WTC11 (cell line): ENCODE measurements at regions of chr13 and their contacts with region 1.

Region 1: GRCh38 chr13:81872581-81872980 is 1531.7 kb upstream of the SPRY2 start:
- DNase-seq: no peak
- ATAC-seq: peak; percentile 15
- H3K4me3 Mint-ChIP-seq: no peak overlapping the region
- H3K27ac Mint-ChIP-seq: no peak overlapping the region; the same call in 1 of the 2 replicates
- H3K4me1 Mint-ChIP-seq: peaks cover 71% of the 10 kb centered on the region
- H3K27me3 Mint-ChIP-seq: no peaks in the 10 kb centered on the region; the same call in 1 of the 2 replicates
- CTCF ChIP-seq: no peak

Region 2: DNA sequence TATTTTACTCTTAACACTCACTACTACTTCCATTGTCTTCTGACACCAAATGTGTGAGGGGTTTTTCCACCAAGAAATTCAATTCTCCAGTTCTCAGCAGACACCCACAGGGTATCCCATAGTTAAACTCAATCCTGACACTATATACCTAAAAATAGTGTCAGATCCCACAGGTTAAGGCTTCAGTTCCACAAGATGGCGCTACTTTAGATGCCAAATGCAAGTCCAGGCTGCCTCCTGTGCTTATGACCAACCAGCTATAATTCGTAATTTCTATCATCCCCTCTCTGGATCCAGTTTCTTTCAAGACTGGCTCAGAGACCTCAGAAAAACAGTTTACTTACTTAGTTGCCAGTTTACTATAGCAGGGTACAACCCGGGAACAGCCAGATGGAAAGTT is 385.4 kb before region 1 on chr13:
- CTCF ChIA-PET with region 1: interaction called, 17 read pairs
- POLR2A ChIA-PET with region 1: no interaction called
- DNase-seq: peak; percentile 49
- ATAC-seq: peak; percentile 100
- H3K4me3 Mint-ChIP-seq: no peak overlapping the region
- H3K27ac Mint-ChIP-seq: no peak overlapping the region
- H3K4me1 Mint-ChIP-seq: peaks cover 18% of the 10 kb centered on the region
- H3K27me3 Mint-ChIP-seq: no peaks in the 10 kb centered on the region
- CTCF ChIP-seq: peak; percentile 35

Region 3: DNA sequence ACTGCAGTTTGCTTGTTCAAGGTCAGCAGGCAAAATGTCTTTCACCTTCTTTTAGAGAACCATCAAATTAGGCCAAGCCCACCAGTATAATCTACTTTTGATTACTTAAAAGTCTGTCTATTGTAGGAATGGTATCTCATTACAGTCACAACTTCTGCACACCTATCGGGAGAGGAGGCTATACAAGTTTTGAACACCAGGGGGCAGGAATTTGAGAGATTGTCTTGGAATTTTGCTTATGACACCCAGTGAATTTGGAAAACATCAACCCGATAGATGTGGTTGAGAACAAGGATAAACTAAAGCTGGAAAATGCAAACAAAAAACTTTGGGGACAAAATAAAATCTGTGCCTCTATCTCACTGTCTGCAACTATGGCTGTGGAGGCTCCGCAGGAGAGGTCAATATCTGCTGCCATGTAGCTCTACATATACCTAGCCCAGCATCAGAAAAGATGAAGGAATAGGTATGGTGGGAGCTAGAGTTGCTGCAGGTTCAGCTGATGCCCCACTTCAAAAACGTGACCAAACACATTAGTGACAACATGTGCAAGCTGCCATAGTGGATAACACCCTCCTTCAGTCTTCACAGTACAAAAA is 232.5 kb before region 1 on chr13:
- CTCF ChIA-PET with region 1: interaction called, 12 read pairs
- POLR2A ChIA-PET with region 1: no interaction called
- DNase-seq: peak; percentile 13
- ATAC-seq: peak; percentile 56
- H3K4me3 Mint-ChIP-seq: no peak overlapping the region
- H3K27ac Mint-ChIP-seq: no peak overlapping the region
- H3K4me1 Mint-ChIP-seq: no peaks in the 10 kb centered on the region
- H3K27me3 Mint-ChIP-seq: no peaks in the 10 kb centered on the region
- CTCF ChIP-seq: peak; percentile 54

Region 4: DNA sequence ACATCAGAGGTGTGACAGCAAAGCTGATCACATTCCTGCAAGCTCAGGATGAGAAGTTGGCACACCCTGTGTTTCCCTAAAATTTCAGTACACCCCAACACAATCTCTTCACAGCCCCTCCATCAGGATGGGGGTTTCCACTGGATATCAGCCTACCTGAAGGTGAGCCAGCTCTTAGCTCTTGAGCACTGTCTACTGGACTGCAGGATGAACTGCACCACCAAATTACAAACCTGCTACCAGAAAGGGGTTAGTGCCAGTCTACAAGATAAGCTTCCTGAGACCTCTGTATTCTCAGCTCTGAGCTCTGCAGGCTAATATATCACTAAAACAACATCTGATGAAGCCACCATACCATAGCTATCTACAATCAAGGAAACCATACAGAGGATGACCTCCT is 84.6 kb after region 1 on chr13:
- CTCF ChIA-PET with region 1: interaction called, 10 read pairs
- POLR2A ChIA-PET with region 1: no interaction called
- DNase-seq: peak; percentile 21
- ATAC-seq: peak; percentile 100
- H3K4me3 Mint-ChIP-seq: no peak overlapping the region
- H3K27ac Mint-ChIP-seq: no peak overlapping the region
- H3K4me1 Mint-ChIP-seq: peaks cover 2% of the 10 kb centered on the region; the same call in 1 of the 2 replicates
- H3K27me3 Mint-ChIP-seq: no peaks in the 10 kb centered on the region; the same call in 1 of the 2 replicates
- CTCF ChIP-seq: peak; percentile 45

Region 5: DNA sequence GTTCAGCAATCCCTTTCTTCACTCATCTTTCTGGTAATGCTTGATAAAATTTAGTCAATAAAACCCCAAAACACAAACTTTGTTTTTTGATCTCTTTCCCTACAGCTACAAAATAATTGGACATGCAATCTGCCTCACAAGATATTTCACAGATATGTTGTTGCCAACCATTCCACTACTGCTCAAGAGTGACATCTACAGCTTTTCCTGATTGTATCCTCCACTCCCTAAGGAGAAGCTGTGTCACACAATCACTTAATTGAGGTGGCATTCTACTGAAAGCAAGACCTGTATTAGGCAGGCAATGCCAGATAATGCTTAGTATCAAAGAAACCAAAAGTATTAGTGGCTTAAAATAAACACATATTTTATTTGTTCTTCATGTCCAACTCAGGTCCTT is 114.6 kb after region 1 on chr13:
- CTCF ChIA-PET with region 1: interaction called, 12 read pairs
- POLR2A ChIA-PET with region 1: no interaction called
- DNase-seq: no peak
- ATAC-seq: peak; percentile 71
- H3K4me3 Mint-ChIP-seq: peak overlapping the region; percentile 15
- H3K27ac Mint-ChIP-seq: 0 out of 2 replicates have a peak overlapping the region, but pooled peaks have one; percentile 70
- H3K4me1 Mint-ChIP-seq: peaks cover 63% of the 10 kb centered on the region
- H3K27me3 Mint-ChIP-seq: peaks cover 65% of the 10 kb centered on the region
- CTCF ChIP-seq: no peak